Naive thymus-derived CD4-positive, alpha-beta T cell (primary cell): ENCODE measurements at regions of chr10 and their contacts with region 1.

Region 1: GRCh38 chr10:5502903-5503835 is 3.8 kb upstream of the CALML5 start:
- DNase-seq: no peak
- ATAC-seq: no peak
- H3K4me3 ChIP-seq: no peak overlapping the region
- H3K4me3 Mint-ChIP-seq: no peak overlapping the region
- H3K27ac ChIP-seq: no peak overlapping the region
- H3K27ac Mint-ChIP-seq: peak overlapping the region in 1 of 9 donors; percentile 25
- H3K4me1 ChIP-seq: no peaks in the 10 kb centered on the region
- H3K4me1 Mint-ChIP-seq: peaks cover 0 to 7% (median 0%) of the 10 kb centered on the region in 7 donors
- H3K27me3 ChIP-seq: no peaks in the 10 kb centered on the region
- H3K27me3 Mint-ChIP-seq: peaks cover 0 to 11% (median 0%) of the 10 kb centered on the region in 5 donors

Region 2: DNA sequence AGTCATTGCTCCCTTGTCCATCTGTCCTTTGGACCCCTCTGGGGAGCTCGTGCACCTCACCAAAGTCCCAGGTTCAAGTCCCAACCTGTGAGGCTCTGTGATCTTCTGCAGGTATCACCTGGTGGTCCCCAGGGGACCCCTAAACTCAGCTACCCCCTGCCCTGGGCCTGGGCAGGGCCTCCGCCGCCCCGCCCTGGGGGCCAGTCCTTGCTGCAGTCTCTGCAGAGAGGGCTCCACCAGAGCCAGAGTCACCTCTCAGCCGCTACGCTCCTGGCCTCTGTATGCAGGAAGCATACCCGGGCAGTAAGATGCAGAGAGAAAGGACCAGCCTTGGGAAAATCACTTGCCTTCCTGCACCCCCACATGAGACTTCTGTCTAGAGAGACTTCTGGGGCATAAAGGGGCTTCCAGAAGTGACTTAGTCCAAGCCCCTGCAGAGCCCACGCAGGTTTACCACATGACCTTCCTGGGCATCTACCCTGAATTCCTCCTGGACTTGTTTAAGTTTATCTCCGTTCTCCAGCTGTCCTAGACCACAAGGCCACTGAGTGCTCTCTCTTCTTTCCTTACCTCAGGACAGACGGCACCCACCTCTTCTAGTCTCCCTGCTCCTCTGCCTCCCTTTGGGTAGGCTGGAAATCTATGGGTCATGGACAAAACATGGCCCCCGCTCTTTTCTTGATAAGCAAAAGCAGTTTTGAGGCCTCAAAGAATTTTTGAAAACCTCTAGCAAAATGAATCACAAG is 25.0 kb before region 1 on chr10:
- CTCF ChIA-PET with region 1: no interaction called
- POLR2A ChIA-PET with region 1: no interaction called
- intact Hi-C with region 1: no loop called
- DNase-seq: no peak
- ATAC-seq: no peak
- H3K4me3 ChIP-seq: no peak overlapping the region
- H3K4me3 Mint-ChIP-seq: no peak overlapping the region
- H3K27ac ChIP-seq: no peak overlapping the region
- H3K27ac Mint-ChIP-seq: no peak overlapping the region
- H3K4me1 ChIP-seq: no peaks in the 10 kb centered on the region
- H3K4me1 Mint-ChIP-seq: peaks cover 0 to 3% (median 0%) of the 10 kb centered on the region in 7 donors
- H3K27me3 ChIP-seq: no peaks in the 10 kb centered on the region
- H3K27me3 Mint-ChIP-seq: peaks cover 0 to 3% (median 0%) of the 10 kb centered on the region in 5 donors

Region 3: GRCh38 chr10:5536486-5537081 is 33.4 kb after region 1 on chr10:
- CTCF ChIA-PET with region 1: no interaction called
- POLR2A ChIA-PET with region 1: no interaction called
- intact Hi-C with region 1: loop called in 1 of 2 experiments (anchors 1 kb)
- DNase-seq: no peak
- ATAC-seq: no peak
- H3K4me3 ChIP-seq: no peak overlapping the region
- H3K4me3 Mint-ChIP-seq: no peak overlapping the region
- H3K27ac ChIP-seq: no peak overlapping the region
- H3K27ac Mint-ChIP-seq: no peak overlapping the region
- H3K4me1 ChIP-seq: no peaks in the 10 kb centered on the region
- H3K4me1 Mint-ChIP-seq: peaks cover 0 to 11% (median 4%) of the 10 kb centered on the region in 7 donors
- H3K27me3 ChIP-seq: no peaks in the 10 kb centered on the region
- H3K27me3 Mint-ChIP-seq: peaks cover 0 to 9% (median 0%) of the 10 kb centered on the region in 5 donors